ENCODE measurements at regions of chr18 and their contacts with region 1.

Region 1: GRCh38 chr18:24397694-24398365 is at the start of gene OSBPL1A:
- DNase-seq: peak; percentile 98
- H3K4me3 ChIP-seq: peak within 1 kb of the TSS; percentile 71
- H3K27ac ChIP-seq: peak within 1 kb of the TSS; percentile 89
- H3K4me1 ChIP-seq: peaks cover 20% of the 10 kb centered on the region
- H3K27me3 ChIP-seq: no peaks in the 10 kb centered on the region
- CTCF ChIP-seq: no peak
- total RNA-seq, gene OSBPL1A: 26.1 and 30.7 TPM in 2 replicates

Region 2: DNA sequence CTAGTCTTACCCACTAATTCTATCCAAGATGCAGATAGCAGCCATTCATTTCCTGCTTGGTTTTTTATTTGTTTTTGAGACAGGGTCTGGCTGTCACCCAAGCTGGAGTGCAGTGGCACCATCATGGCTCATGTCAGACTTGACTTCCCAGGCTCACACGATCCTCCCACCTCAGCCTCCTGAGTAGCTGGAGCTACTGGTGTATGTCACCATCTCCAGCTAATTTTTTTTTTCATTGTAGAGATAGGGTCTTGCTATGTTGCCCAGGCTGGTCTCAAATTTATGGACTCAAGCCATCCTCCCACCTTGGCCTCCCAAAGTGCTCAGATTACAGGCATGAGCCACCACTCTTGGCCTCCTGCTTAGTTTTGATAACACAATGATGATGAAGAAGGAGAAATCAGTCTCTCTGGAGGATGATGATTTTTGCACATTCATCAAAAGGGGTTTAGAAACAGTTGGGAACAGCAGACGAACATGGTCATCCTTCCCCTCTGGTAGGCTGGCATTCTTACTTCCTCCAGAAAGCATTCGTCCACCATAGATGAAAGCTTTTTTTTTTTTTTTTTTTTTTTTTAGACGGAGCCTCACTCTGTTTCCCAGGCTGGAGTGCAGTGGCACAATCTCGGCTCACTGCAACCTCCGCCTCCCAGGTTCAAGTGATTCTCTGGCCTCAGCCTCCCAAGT is 426.9 kb before region 1 on chr18:
- CTCF ChIA-PET with region 1: no interaction called
- POLR2A ChIA-PET with region 1: interaction called, 24 read pairs
- intact Hi-C with region 1: no loop called
- DNase-seq: no peak
- H3K4me3 ChIP-seq: no peak overlapping the region
- H3K27ac ChIP-seq: no peak overlapping the region
- H3K4me1 ChIP-seq: peaks cover 5% of the 10 kb centered on the region
- H3K27me3 ChIP-seq: no peaks in the 10 kb centered on the region
- CTCF ChIP-seq: no peak

Region 3: GRCh38 chr18:24189007-24189528 is 208.8 kb before region 1 on chr18:
- CTCF ChIA-PET with region 1: no interaction called
- POLR2A ChIA-PET with region 1: interaction called, 14 read pairs
- intact Hi-C with region 1: no loop called
- DNase-seq: no peak
- H3K4me3 ChIP-seq: no peak overlapping the region
- H3K27ac ChIP-seq: no peak overlapping the region
- H3K4me1 ChIP-seq: no peaks in the 10 kb centered on the region
- H3K27me3 ChIP-seq: no peaks in the 10 kb centered on the region
- CTCF ChIP-seq: no peak

Measured in A673 (cell line).